Activated CD8-positive, alpha-beta T cell treated with anti-CD3 and anti-CD28 coated beads, Interleukin-2, amount 10 ng/mL, durations not matched to agents 7 days and 5 days (primary cell): ENCODE measurements at regions of chr6 and their contacts with region 1.

Region 1: DNA sequence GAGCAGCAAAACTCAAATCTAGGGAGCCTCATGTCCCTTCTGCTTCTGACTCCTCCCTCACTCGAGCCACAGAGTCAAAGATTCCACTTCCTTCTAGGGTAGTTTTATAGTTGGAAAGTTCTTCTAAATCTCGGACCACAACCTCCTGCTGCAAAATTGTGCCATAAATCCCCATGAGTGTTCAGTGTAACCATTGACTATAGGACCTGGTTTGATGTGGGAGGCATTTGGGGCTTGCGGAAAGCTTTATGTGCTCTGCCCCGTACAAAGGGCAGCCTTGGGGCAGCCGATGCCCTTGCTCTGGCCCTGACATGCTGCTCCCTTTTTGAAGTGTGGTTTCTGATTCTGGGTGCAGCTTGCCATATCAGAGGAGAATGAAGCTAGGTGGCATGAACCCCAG is 43.6 kb upstream of the IER3 start:
- DNase-seq: peak; percentile 77
- ATAC-seq: peak; percentile 83
- H3K4me3 Mint-ChIP-seq: peak overlapping the region; percentile 53
- H3K27ac Mint-ChIP-seq: peak overlapping the region; percentile 90
- H3K4me1 Mint-ChIP-seq: peaks cover 76% of the 10 kb centered on the region
- H3K27me3 Mint-ChIP-seq: no peaks in the 10 kb centered on the region

Region 2: GRCh38 chr6:30664994-30665767 is 122.8 kb before region 1 on chr6:
- CTCF ChIA-PET with region 1: no interaction called
- POLR2A ChIA-PET with region 1: no interaction called
- DNase-seq: no peak
- ATAC-seq: no peak
- H3K4me3 Mint-ChIP-seq: no peak overlapping the region
- H3K27ac Mint-ChIP-seq: no peak overlapping the region
- H3K4me1 Mint-ChIP-seq: peaks cover 13% of the 10 kb centered on the region
- H3K27me3 Mint-ChIP-seq: no peaks in the 10 kb centered on the region

Region 3: GRCh38 chr6:30800871-30801270 is 12.9 kb after region 1 on chr6:
- CTCF ChIA-PET with region 1: interaction called, 10 read pairs
- POLR2A ChIA-PET with region 1: interaction called, 3 read pairs
- DNase-seq: no peak
- ATAC-seq: no peak
- H3K4me3 Mint-ChIP-seq: no peak overlapping the region
- H3K27ac Mint-ChIP-seq: no peak overlapping the region
- H3K4me1 Mint-ChIP-seq: peaks cover 33% of the 10 kb centered on the region
- H3K27me3 Mint-ChIP-seq: no peaks in the 10 kb centered on the region

Region 4: GRCh38 chr6:31016659-31017299 is 228.8 kb after region 1 on chr6:
- CTCF ChIA-PET with region 1: no interaction called
- POLR2A ChIA-PET with region 1: no interaction called
- DNase-seq: no peak
- ATAC-seq: no peak
- H3K4me3 Mint-ChIP-seq: no peak overlapping the region
- H3K27ac Mint-ChIP-seq: no peak overlapping the region
- H3K4me1 Mint-ChIP-seq: no peaks in the 10 kb centered on the region
- H3K27me3 Mint-ChIP-seq: peaks cover 21% of the 10 kb centered on the region